Heart right ventricle (tissue), 16 donors: ENCODE measurements at regions of chr6 and their contacts with region 1.

Region 1: GRCh38 chr6:121849477-121849876 is 414.0 kb downstream of the GJA1 start:
- DNase-seq: peak in 1 of 2 donors; percentile 79
- ATAC-seq: peak; percentile 88 to 96 (median 92)
- H3K4me3 ChIP-seq: no peak overlapping the region
- H3K27ac ChIP-seq: peak overlapping the region in 3 of 10 donors; percentile 16 to 60 (median 29)
- H3K4me1 ChIP-seq: peaks cover 0 to 30% (median 16%) of the 10 kb centered on the region in 9 donors
- H3K27me3 ChIP-seq: no peaks in the 10 kb centered on the region
- CTCF ChIP-seq: peak; percentile 66 to 88 (median 75)

Region 2: GRCh38 chr6:121430514-121431460 is 418.7 kb before region 1 on chr6:
- intact Hi-C with region 1: loop called in 8 of 10 experiments (anchors 2 to 5 kb)
- DNase-seq: no peak
- ATAC-seq: peak in 2 of 8 donors; percentile 43 to 48
- H3K4me3 ChIP-seq: peak overlapping the region in 2 of 10 donors; percentile 8 to 14
- H3K27ac ChIP-seq: peak overlapping the region in 4 of 10 donors; percentile 6 to 32 (median 26)
- H3K4me1 ChIP-seq: peaks cover 0 to 24% (median 8%) of the 10 kb centered on the region in 9 donors
- H3K27me3 ChIP-seq: peaks cover 0 to 3% (median 0%) of the 10 kb centered on the region in 7 donors
- CTCF ChIP-seq: peak; percentile 44 to 89 (median 66)

Region 3: DNA sequence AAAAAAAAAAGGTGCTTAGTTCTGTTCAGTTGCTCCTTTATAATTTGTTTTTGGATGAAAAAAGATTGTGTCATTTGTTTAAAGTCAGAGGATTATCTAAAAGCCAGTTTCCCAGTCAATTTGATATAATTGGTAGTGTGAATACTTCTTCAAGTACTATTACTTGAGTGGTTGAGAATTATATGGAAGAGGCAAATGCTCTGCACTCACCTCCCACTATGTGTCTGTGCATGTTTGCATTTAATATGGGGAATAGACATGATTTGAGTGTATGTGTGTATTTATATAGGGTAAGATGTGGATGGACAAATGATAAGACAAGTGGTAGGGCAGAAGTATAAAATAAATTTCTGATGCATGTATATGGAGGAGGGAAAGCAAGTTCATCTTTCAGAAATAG is 398.2 kb before region 1 on chr6:
- intact Hi-C with region 1: loop called in 1 of 10 experiments (anchors 5 kb)
- DNase-seq: no peak
- ATAC-seq: no peak
- H3K4me3 ChIP-seq: no peak overlapping the region
- H3K27ac ChIP-seq: no peak overlapping the region
- H3K4me1 ChIP-seq: peaks cover 0 to 27% (median 5%) of the 10 kb centered on the region in 9 donors
- H3K27me3 ChIP-seq: no peaks in the 10 kb centered on the region
- CTCF ChIP-seq: no peak

Region 4: GRCh38 chr6:121652726-121653623 is 196.5 kb before region 1 on chr6:
- intact Hi-C with region 1: loop called in 1 of 10 experiments (anchors 10 kb)
- DNase-seq: no peak
- ATAC-seq: peak in 6 of 8 donors; percentile 26 to 80 (median 58)
- H3K4me3 ChIP-seq: no peak overlapping the region
- H3K27ac ChIP-seq: peak overlapping the region; percentile 3 to 82 (median 64)
- H3K4me1 ChIP-seq: peaks cover 0 to 27% (median 4%) of the 10 kb centered on the region in 9 donors
- H3K27me3 ChIP-seq: no peaks in the 10 kb centered on the region
- CTCF ChIP-seq: no peak

Region 5: GRCh38 chr6:122008101-122008999 is 158.9 kb after region 1 on chr6:
- intact Hi-C with region 1: loop called in 1 of 10 experiments (anchors 5 kb)
- DNase-seq: peak; percentile 13 to 66
- ATAC-seq: peak; percentile 91 to 99 (median 97)
- H3K4me3 ChIP-seq: no peak overlapping the region
- H3K27ac ChIP-seq: peak overlapping the region; percentile 11 to 82 (median 68)
- H3K4me1 ChIP-seq: peaks cover 0 to 32% (median 12%) of the 10 kb centered on the region in 9 donors
- H3K27me3 ChIP-seq: no peaks in the 10 kb centered on the region
- CTCF ChIP-seq: no peak

Region 6: GRCh38 chr6:122033539-122034181 is 184.2 kb after region 1 on chr6:
- intact Hi-C with region 1: loop called in 8 of 10 experiments (anchors 5 to 10 kb)
- DNase-seq: no peak
- ATAC-seq: peak; percentile 70 to 91 (median 86)
- H3K4me3 ChIP-seq: no peak overlapping the region
- H3K27ac ChIP-seq: peak overlapping the region in 2 of 10 donors; percentile 19 to 35
- H3K4me1 ChIP-seq: peaks cover 0 to 9% (median 0%) of the 10 kb centered on the region in 9 donors
- H3K27me3 ChIP-seq: no peaks in the 10 kb centered on the region
- CTCF ChIP-seq: peak; percentile 20 to 80 (median 65)